ENCODE measurements at regions of chrX and their contacts with region 1.

Region 1: GRCh38 chrX:129925305-129926092 is 19.5 kb downstream of the UTP14A start:
- DNase-seq: peak; percentile 75
- H3K4me3 ChIP-seq: no peak overlapping the region
- H3K27ac ChIP-seq: no peak overlapping the region
- H3K4me1 ChIP-seq: no peaks in the 10 kb centered on the region
- CTCF ChIP-seq: peak; percentile 78

Region 2: GRCh38 chrX:129606918-129607317 is 318.6 kb before region 1 on chrX:
- CTCF ChIA-PET with region 1: no interaction called
- POLR2A ChIA-PET with region 1: no interaction called
- intact Hi-C with region 1: loop called (anchors 5 kb)
- DNase-seq: peak; percentile 53
- H3K4me3 ChIP-seq: no peak overlapping the region
- H3K27ac ChIP-seq: no peak overlapping the region
- H3K4me1 ChIP-seq: peaks cover 8% of the 10 kb centered on the region
- CTCF ChIP-seq: peak; percentile 78

Region 3: DNA sequence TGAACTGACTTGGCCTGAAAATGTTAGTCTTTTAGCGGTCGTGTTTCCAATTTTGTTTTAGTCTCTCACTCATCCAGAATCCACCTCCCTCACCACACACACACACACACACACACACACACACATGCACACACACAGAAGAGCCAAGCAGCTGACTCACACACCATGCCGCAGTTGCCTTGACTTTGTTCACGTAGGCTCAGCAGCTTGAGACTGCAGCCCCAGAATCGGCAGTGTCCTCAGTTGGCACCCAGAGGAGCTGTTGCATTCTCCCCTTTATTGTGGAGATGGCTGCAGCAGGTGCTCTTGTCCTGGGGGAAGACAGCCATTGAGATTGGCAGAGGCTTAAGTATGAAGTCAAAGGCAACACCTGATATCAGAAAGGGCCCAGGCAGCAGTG is 207.6 kb before region 1 on chrX:
- CTCF ChIA-PET with region 1: no interaction called
- POLR2A ChIA-PET with region 1: no interaction called
- intact Hi-C with region 1: no loop called
- DNase-seq: no peak
- H3K4me3 ChIP-seq: no peak overlapping the region
- H3K27ac ChIP-seq: no peak overlapping the region
- H3K4me1 ChIP-seq: no peaks in the 10 kb centered on the region
- CTCF ChIP-seq: no peak

Region 4: DNA sequence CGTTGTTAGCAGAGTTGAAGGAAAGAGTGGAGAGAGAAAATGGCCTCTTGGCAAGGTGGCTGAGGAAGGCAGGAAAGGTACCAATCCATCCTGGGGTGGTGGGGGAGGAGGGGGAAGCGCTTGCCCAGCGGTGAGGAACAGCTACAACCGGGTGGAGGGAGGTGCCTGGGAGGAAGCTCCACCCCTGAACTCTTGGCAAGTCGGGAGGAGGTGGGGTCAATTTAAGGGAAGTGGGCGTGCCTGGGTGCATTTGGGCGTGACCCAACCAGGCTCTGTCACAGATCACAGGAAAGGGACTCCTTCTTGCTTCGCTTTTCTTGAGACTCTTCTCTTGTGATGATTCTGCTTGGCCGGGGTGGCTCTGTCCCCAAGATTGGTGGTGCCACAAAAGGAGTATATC is 98.6 kb after region 1 on chrX:
- CTCF ChIA-PET with region 1: interaction called, 6 read pairs
- POLR2A ChIA-PET with region 1: no interaction called
- intact Hi-C with region 1: loop called (anchors 1 kb)
- DNase-seq: peak; percentile 91
- H3K4me3 ChIP-seq: peak overlapping the region; percentile 36
- H3K27ac ChIP-seq: no peak overlapping the region
- H3K4me1 ChIP-seq: peaks cover 13% of the 10 kb centered on the region
- CTCF ChIP-seq: no peak

Region 5: DNA sequence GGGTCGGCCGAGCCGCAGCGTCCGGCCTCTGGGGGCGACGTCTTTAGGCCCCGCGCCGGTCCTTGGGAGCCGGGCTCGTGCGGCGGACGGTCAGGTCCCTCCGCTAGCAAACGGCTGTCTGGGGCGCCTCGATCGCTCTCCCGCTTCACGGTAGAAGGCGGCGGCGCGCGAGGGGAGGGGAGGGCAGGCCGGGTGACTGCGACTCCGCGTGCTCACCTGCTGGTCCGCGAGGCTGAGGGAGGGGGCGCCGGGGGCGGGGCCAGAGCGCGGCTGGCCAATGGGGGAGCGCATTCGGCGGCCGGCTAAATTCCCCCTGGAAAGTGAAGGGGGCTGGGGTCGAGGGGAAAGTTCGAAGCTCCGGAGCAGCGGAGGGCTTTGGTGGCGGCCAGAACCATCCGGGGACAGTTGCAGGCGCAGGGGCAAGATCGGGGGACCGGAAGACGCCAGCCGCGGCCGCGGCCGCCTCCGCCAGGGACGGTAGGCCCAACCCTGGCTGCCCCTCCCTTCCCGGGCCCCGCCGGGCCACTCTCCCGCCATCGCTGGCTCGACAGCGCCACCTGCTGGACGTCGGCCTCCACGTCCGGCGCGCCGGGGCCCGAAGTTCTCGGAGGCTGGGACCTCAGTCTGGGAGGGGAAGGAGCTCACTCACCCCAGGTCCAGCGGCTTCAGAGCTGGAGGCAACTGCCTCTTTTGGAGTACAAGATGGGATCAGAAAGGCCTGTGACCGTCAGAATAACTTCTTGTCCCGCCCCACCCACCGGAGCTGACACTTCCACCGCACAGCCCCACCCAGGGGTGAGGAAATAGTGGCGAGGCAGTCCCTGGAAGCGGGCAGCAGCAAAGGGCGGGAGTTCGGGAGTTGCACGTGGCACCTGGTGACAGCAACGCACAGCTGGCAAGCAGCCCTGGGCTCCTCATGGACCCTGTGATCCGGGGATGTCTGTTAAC is 134.9 kb after region 1 on chrX:
- CTCF ChIA-PET with region 1: interaction called, 13 read pairs
- POLR2A ChIA-PET with region 1: no interaction called
- intact Hi-C with region 1: loop called (anchors 1 kb)
- DNase-seq: peak; percentile 76
- H3K4me3 ChIP-seq: peak overlapping the region; percentile 66
- H3K27ac ChIP-seq: no peak overlapping the region
- H3K4me1 ChIP-seq: peaks cover 10% of the 10 kb centered on the region
- CTCF ChIP-seq: peak; percentile 80

Region 6: DNA sequence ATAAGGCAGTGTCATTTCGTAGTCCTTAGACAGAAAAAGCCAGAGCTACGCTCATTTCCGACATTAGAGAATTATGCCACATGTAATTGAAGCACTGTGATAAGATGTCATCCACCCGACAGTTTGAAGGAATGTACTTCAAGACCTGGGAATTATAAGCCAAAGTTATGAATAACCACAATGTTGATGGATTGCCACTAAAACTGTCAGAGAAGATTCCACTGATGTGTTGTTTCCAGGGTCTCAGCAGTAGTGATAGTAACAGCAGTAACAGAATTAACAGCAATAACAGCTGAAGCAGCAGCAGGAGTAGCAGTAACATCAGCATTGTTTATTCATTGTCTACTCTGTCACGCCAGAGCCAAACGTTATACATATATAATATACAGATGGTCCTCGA is 271.0 kb after region 1 on chrX:
- CTCF ChIA-PET with region 1: no interaction called
- POLR2A ChIA-PET with region 1: no interaction called
- intact Hi-C with region 1: loop called (anchors 10 kb)
- DNase-seq: no peak
- H3K4me3 ChIP-seq: no peak overlapping the region
- H3K27ac ChIP-seq: no peak overlapping the region
- H3K4me1 ChIP-seq: peaks cover 6% of the 10 kb centered on the region
- CTCF ChIP-seq: no peak

Measured in OCI-LY7 (cell line).